Activated CD4-positive, alpha-beta memory T cell treated with anti-CD3 and anti-CD28 coated beads, Interleukin-2, amount 10 ng/mL, durations not matched to agents 7 days and 5 days (primary cell): ENCODE measurements at regions of chr13 and their contacts with region 1.

Region 1: DNA sequence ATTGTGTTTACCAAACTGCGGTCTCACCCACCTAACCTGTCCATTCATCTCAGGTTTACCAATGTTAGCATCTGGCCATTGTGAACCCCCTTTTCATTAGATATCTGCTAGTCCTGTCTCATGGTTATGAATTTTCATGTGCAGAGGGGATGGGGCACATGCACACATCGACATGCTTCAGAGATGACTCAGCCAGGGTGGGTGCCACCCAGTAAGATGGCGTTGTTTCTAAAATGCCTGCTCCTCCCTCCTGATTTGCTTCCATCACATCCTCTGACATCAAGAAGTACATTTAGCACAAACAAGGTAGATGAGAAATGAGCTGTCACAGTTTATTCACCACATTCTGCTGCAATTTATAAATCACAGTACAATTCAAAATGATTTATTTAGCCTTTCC is 51.3 kb downstream of the GPALPP1 start:
- DNase-seq: peak; percentile 24
- H3K4me3 Mint-ChIP-seq: no peak overlapping the region
- H3K27ac Mint-ChIP-seq: no peak overlapping the region
- H3K4me1 Mint-ChIP-seq: peaks cover 5% of the 10 kb centered on the region
- H3K27me3 Mint-ChIP-seq: peaks cover 5% of the 10 kb centered on the region

Region 2: DNA sequence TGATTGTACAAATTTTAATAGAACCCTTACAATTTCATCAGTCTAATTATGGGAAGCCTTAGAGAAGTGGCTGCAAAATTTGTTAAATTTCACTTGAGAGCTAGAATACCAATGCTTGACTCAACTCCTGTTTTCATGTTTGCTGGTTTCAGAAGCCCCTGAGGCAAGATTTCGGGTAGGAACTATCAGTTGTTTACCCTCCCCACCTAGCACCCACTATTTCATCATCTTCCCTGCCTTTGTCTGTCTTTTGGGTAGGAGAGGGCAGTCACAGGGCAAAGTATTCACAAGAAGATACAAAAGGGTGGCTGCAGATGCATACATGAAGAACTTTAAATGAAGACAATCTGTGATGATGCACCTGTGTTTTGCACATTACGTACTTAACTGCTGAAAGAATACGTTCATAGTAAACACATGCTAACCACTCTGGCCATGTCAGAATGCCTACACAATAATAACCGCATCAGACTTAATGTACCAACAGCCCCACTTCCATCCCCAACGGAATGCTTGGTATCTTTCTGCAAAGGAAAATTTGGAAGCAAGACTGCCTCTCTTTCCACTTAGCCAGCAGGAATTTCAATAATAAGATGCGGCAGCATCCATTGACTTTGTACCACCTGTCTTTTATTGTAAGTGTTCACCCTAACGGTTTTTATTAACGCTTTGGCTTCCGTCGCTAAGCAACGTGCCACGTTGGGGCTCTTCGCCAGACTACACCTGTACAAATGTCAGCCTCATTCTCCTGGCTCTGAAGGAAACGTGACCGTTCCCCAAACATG is 269.9 kb after region 1 on chr13:
- CTCF ChIA-PET with region 1: interaction called, 102 read pairs
- POLR2A ChIA-PET with region 1: no interaction called
- DNase-seq: no peak
- H3K4me3 Mint-ChIP-seq: peak overlapping the region; percentile 69
- H3K27ac Mint-ChIP-seq: peak overlapping the region; percentile 3
- H3K4me1 Mint-ChIP-seq: peaks cover 18% of the 10 kb centered on the region
- H3K27me3 Mint-ChIP-seq: peaks cover 23% of the 10 kb centered on the region